CD4-positive, alpha-beta T cell (primary cell): ENCODE measurements at regions of chr16 and their contacts with region 1.

Region 1: DNA sequence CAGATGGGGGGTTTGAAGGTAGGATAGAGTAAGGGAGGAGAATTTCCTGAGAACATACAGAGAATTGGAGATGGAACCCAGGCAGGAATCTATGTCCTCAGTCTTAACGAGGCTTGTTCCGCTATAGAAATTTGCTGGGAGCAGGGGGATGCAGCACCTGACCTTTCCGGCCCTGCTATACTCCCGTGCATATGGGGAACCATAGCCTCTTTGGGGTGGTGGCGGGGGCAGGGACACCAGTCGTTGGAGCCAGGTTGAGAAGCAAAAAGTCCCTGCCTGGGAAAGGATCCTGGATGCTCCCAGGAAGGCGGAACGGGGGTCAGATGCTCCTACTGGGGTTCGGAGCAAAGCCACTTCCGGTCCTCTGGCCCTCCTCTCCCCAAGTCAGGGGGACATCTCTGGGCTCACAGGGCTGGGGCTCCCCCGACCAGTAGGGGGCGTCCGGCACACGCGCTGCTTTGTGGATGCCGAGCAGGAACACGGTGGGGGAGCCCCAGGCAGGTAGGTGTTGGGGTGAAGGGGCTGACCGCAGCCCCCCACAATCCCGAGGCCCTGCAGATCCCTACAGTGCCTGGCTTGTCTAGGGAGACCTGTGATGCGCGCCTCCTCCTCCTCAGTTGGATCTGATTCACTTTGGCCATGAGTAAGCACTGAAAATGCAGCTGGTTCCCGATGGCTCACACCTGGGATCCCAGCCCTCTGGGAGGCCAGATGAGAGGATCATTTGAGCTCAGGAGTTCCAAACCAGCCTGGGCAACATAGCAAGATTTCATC is 15.5 kb upstream of the TFAP4 start:
- DNase-seq: peak; percentile 75 to 92 (median 80)
- ATAC-seq: peak; percentile 97
- H3K4me3 ChIP-seq: no peak overlapping the region
- H3K4me3 Mint-ChIP-seq: no peak overlapping the region
- H3K27ac ChIP-seq: no peak overlapping the region
- H3K27ac Mint-ChIP-seq: no peak overlapping the region
- H3K4me1 ChIP-seq: peaks cover 8% of the 10 kb centered on the region
- H3K4me1 Mint-ChIP-seq: no peaks in the 10 kb centered on the region
- H3K27me3 ChIP-seq: peaks cover 0 to 3% of the 10 kb centered on the region in 2 experiments
- H3K27me3 Mint-ChIP-seq: peaks cover 12% of the 10 kb centered on the region
- CTCF ChIP-seq: peak; percentile 99

Region 2: DNA sequence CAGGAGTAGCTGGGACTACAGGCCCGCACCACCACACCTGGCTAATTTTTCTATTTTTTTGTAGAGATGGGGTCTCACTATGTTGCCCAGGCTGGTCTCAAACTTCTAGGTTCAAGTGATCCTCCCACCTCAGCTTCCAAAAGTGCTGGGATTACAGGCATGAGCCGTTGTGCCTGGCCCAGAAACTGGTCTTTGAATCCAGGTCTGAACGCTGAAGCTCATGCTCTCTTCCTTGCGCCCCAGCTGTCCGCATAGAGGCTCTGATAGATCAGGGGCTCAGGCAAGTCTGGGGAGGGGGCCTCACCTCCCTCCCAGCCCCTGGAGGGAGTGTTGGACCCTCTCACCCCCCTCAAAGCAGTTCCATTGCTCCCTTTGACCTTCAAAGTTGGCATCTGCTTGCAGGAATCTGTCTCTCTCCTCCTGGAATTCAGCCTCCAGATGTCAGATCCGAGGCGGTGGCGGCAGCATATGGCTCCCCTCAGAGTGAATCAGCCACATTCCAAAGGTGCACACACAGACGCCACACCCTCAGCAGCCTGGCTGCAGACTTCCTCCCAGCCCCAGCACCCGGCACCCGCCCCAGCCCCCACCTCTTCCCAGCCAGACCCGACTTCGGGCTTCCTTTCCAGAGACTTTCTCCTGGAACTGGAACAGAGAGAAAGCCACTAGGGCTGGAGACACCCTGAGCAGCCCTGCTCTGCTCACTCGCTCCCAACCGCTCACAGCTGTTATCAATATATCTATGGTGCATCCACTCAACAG is 10.6 kb after region 1 on chr16:
- CTCF ChIA-PET with region 1: interaction called, 5 read pairs
- POLR2A ChIA-PET with region 1: no interaction called
- intact Hi-C with region 1: loop called in 1 of 2 experiments (anchors 1 kb)
- DNase-seq: no peak
- ATAC-seq: no peak
- H3K4me3 ChIP-seq: no peak overlapping the region
- H3K4me3 Mint-ChIP-seq: no peak overlapping the region
- H3K27ac ChIP-seq: no peak overlapping the region
- H3K27ac Mint-ChIP-seq: no peak overlapping the region
- H3K4me1 ChIP-seq: peaks cover 5% of the 10 kb centered on the region
- H3K4me1 Mint-ChIP-seq: no peaks in the 10 kb centered on the region
- H3K27me3 ChIP-seq: no peaks in the 10 kb centered on the region
- H3K27me3 Mint-ChIP-seq: no peaks in the 10 kb centered on the region
- CTCF ChIP-seq: no peak

Region 3: GRCh38 chr16:4330277-4330874 is 42.0 kb after region 1 on chr16:
- CTCF ChIA-PET with region 1: interaction called, 20 read pairs
- POLR2A ChIA-PET with region 1: interaction called, 4 read pairs
- intact Hi-C with region 1: loop called (anchors 1 kb)
- DNase-seq: peak; percentile 52 to 82 (median 65)
- ATAC-seq: peak; percentile 63
- H3K4me3 ChIP-seq: no peak overlapping the region
- H3K4me3 Mint-ChIP-seq: no peak overlapping the region
- H3K27ac ChIP-seq: no peak overlapping the region
- H3K27ac Mint-ChIP-seq: no peak overlapping the region
- H3K4me1 ChIP-seq: peaks cover 19% of the 10 kb centered on the region
- H3K4me1 Mint-ChIP-seq: no peaks in the 10 kb centered on the region
- H3K27me3 ChIP-seq: peaks cover 4 to 9% of the 10 kb centered on the region in 2 experiments
- H3K27me3 Mint-ChIP-seq: no peaks in the 10 kb centered on the region
- CTCF ChIP-seq: peak; percentile 91

Region 4: DNA sequence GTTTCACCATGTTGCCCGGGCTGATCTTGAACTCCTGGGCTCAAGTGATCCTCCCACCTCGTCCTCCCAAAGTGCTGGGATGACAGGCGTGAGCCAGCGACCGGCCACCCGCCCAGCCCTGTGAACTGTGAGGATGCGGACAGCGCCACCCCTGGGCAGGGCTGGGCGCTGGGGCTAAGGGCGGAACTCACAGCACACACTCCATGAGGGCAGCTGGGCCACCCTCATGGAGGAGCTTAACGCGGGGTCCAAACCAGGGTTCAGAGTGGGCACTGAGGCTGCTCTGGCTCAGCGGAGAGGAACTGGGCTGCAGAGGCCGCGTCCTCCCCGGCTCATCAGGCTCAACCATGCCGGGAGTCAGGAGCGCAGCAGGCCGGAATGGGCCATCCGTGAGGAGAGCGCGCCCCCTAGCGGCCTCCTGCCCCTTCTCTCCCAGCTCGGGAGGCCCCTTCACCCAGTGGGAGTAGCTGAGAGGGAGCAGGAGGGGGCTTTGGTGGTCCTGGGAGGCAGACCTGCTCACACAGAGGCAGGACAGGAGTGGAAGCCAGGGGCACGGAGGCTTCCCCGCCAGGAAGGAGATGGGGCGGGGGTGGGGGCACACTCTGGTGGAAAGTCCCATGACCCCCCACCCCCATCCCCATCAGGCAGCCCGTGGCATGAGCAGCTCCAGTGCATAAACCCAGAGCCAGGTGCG is 114.3 kb after region 1 on chr16:
- CTCF ChIA-PET with region 1: interaction called, 3 read pairs
- POLR2A ChIA-PET with region 1: no interaction called
- intact Hi-C with region 1: loop called in 1 of 2 experiments (anchors 1 kb)
- DNase-seq: peak in 13 of 14 experiments; percentile 47 to 78 (median 64)
- ATAC-seq: peak; percentile 39
- H3K4me3 ChIP-seq: no peak overlapping the region
- H3K4me3 Mint-ChIP-seq: peak overlapping the region; percentile 20
- H3K27ac ChIP-seq: no peak overlapping the region
- H3K27ac Mint-ChIP-seq: peak overlapping the region; percentile 84
- H3K4me1 ChIP-seq: peaks cover 23% of the 10 kb centered on the region
- H3K4me1 Mint-ChIP-seq: peaks cover 22% of the 10 kb centered on the region
- H3K27me3 ChIP-seq: no peaks in the 10 kb centered on the region
- H3K27me3 Mint-ChIP-seq: no peaks in the 10 kb centered on the region
- CTCF ChIP-seq: peak; percentile 77

Region 5: GRCh38 chr16:4580245-4580644 is 291.9 kb after region 1 on chr16:
- CTCF ChIA-PET with region 1: no interaction called
- POLR2A ChIA-PET with region 1: no interaction called
- intact Hi-C with region 1: loop called in 1 of 2 experiments (anchors 10 kb)
- DNase-seq: no peak
- ATAC-seq: no peak
- H3K4me3 ChIP-seq: no peak overlapping the region
- H3K4me3 Mint-ChIP-seq: no peak overlapping the region
- H3K27ac ChIP-seq: no peak overlapping the region
- H3K27ac Mint-ChIP-seq: no peak overlapping the region
- H3K4me1 ChIP-seq: peaks cover 1% of the 10 kb centered on the region
- H3K4me1 Mint-ChIP-seq: no peaks in the 10 kb centered on the region
- H3K27me3 ChIP-seq: no peaks in the 10 kb centered on the region
- H3K27me3 Mint-ChIP-seq: no peaks in the 10 kb centered on the region
- CTCF ChIP-seq: no peak

Region 6: GRCh38 chr16:4957720-4958509 is 669.6 kb after region 1 on chr16 and contains the start of gene SEC14L5:
- CTCF ChIA-PET with region 1: no interaction called
- POLR2A ChIA-PET with region 1: no interaction called
- intact Hi-C with region 1: loop called in 1 of 2 experiments (anchors 2 kb)
- DNase-seq: peak; percentile 79 to 95 (median 89)
- ATAC-seq: peak; percentile 93
- H3K4me3 ChIP-seq: peak within 1 kb of the TSS; percentile 52
- H3K4me3 Mint-ChIP-seq: peak within 1 kb of the TSS; percentile 86
- H3K27ac ChIP-seq: no peak within 1 kb of the TSS
- H3K27ac Mint-ChIP-seq: no peak within 1 kb of the TSS
- H3K4me1 ChIP-seq: peaks cover 26% of the 10 kb centered on the region
- H3K4me1 Mint-ChIP-seq: peaks cover 24% of the 10 kb centered on the region
- H3K27me3 ChIP-seq: peaks cover 13 to 16% of the 10 kb centered on the region in 2 experiments
- H3K27me3 Mint-ChIP-seq: peaks cover 53% of the 10 kb centered on the region
- CTCF ChIP-seq: no peak
- total RNA-seq, gene SEC14L5: not detected